ENCODE measurements at regions of chr11 and their contacts with region 1.

Region 1: GRCh38 chr11:22273781-22274180 is 64.4 kb upstream of the SLC17A6 start:
- DNase-seq: no peak
- ATAC-seq: no peak
- H3K4me3 ChIP-seq: no peak overlapping the region
- H3K27ac ChIP-seq: no peak overlapping the region
- H3K4me1 ChIP-seq: no peaks in the 10 kb centered on the region
- H3K27me3 ChIP-seq: no peaks in the 10 kb centered on the region
- CTCF ChIP-seq: no peak

Region 2: DNA sequence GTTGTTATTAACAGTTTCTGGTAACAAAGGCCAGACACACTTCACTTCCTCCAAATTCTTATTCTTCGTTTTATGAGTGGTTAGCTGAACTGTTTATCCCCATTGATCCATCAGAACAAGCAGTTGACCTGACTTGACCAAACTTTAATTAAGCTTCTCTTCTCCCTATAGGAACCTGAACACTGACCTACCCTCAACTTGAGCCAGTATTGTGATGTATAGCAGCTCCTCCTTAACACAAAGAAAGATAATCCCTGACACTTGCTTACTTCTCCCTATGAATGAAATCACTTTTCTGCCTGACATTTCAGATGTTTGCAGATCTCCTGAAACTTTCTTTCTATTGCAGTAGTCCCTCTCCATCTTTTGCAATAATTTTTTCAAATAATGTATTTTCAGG is 39.0 kb before region 1 on chr11:
- intact Hi-C with region 1: loop called in 1 of 2 experiments (anchors 5 kb)
- DNase-seq: no peak
- ATAC-seq: no peak
- H3K4me3 ChIP-seq: no peak overlapping the region
- H3K27ac ChIP-seq: no peak overlapping the region
- H3K4me1 ChIP-seq: no peaks in the 10 kb centered on the region
- H3K27me3 ChIP-seq: no peaks in the 10 kb centered on the region
- CTCF ChIP-seq: no peak

Measured in psoas muscle (tissue), 8 donors.